Activated CD4-positive, alpha-beta T cell treated with anti-CD3 and anti-CD28 coated beads for 36 hours (primary cell): ENCODE measurements at regions of chr17 and their contacts with region 1.

Region 1: GRCh38 chr17:75864448-75864871 is 9.3 kb upstream of the WBP2 start:
- DNase-seq: peak; percentile 74
- ATAC-seq: peak; percentile 77
- H3K4me3 Mint-ChIP-seq: no peak overlapping the region
- H3K27ac Mint-ChIP-seq: peak overlapping the region; percentile 87
- H3K4me1 Mint-ChIP-seq: peaks cover 20% of the 10 kb centered on the region
- H3K27me3 Mint-ChIP-seq: no peaks in the 10 kb centered on the region

Region 2: GRCh38 chr17:75889454-75889853 is 25.0 kb after region 1 on chr17:
- CTCF ChIA-PET with region 1: interaction called, 5 read pairs
- POLR2A ChIA-PET with region 1: no interaction called
- intact Hi-C with region 1: loop called in 1 of 2 experiments (anchors 2 kb)
- DNase-seq: no peak
- ATAC-seq: peak; percentile 72
- H3K4me3 Mint-ChIP-seq: no peak overlapping the region
- H3K27ac Mint-ChIP-seq: no peak overlapping the region
- H3K4me1 Mint-ChIP-seq: peaks cover 7% of the 10 kb centered on the region
- H3K27me3 Mint-ChIP-seq: no peaks in the 10 kb centered on the region